Activated CD4-positive, alpha-beta T cell treated with anti-CD3 and anti-CD28 coated beads for 36 hours (primary cell): ENCODE measurements at regions of chr6 and their contacts with region 1.

Region 1: GRCh38 chr6:78340755-78341154 is 526.6 kb upstream of the IRAK1BP1 start:
- DNase-seq: no peak
- ATAC-seq: no peak
- H3K4me3 Mint-ChIP-seq: no peak overlapping the region
- H3K27ac Mint-ChIP-seq: no peak overlapping the region
- H3K4me1 Mint-ChIP-seq: no peaks in the 10 kb centered on the region
- H3K27me3 Mint-ChIP-seq: no peaks in the 10 kb centered on the region

Region 2: GRCh38 chr6:78231002-78231401 is 109.8 kb before region 1 on chr6:
- CTCF ChIA-PET with region 1: no interaction called
- POLR2A ChIA-PET with region 1: no interaction called
- intact Hi-C with region 1: no loop called
- DNase-seq: no peak
- ATAC-seq: no peak
- H3K4me3 Mint-ChIP-seq: no peak overlapping the region
- H3K27ac Mint-ChIP-seq: no peak overlapping the region
- H3K4me1 Mint-ChIP-seq: no peaks in the 10 kb centered on the region
- H3K27me3 Mint-ChIP-seq: no peaks in the 10 kb centered on the region

Region 3: DNA sequence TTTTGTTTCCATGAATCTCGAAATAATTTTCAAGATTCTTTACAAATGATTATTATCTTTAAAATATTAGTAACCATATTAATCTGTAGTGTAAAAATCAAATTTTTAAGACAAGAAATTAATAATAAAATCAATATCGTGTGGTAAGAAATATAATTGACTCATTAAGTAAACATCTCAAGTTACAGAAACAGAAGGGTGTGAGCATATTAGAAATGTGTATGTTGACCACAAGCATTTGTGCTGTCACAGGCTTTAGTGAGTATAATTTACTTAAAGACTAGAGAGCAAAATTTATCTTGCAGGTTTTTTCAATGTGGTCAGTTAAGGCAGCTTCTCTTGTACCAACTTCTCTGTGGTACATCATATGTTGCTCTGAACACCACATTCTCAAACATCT is 39.9 kb before region 1 on chr6:
- CTCF ChIA-PET with region 1: no interaction called
- POLR2A ChIA-PET with region 1: no interaction called
- intact Hi-C with region 1: no loop called
- DNase-seq: no peak
- ATAC-seq: no peak
- H3K4me3 Mint-ChIP-seq: no peak overlapping the region
- H3K27ac Mint-ChIP-seq: no peak overlapping the region
- H3K4me1 Mint-ChIP-seq: no peaks in the 10 kb centered on the region
- H3K27me3 Mint-ChIP-seq: no peaks in the 10 kb centered on the region

Region 4: DNA sequence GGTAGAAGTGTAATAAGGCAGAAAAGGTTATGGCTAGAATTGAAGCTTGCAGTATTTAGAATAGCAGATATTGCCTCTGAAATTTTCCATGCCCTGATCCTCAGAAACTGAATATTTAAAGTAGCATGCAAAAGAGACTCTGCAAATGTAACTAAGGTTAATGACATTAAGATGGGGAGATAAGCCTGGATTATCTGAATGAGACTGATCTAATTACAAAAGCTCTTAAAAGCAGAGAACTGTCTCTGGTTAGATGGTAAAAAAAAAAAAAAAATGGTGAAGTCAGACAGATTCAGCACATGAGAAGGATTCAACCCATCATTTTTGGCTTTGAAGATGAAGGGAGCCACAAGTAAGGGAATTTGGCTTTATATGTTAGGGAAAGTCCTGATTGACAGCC is 22.9 kb after region 1 on chr6:
- CTCF ChIA-PET with region 1: no interaction called
- POLR2A ChIA-PET with region 1: interaction called, 3 read pairs
- intact Hi-C with region 1: loop called in 1 of 2 experiments (anchors 2 kb)
- DNase-seq: no peak
- ATAC-seq: no peak
- H3K4me3 Mint-ChIP-seq: no peak overlapping the region
- H3K27ac Mint-ChIP-seq: no peak overlapping the region
- H3K4me1 Mint-ChIP-seq: no peaks in the 10 kb centered on the region
- H3K27me3 Mint-ChIP-seq: no peaks in the 10 kb centered on the region

Region 5: GRCh38 chr6:78390066-78390465 is 49.3 kb after region 1 on chr6:
- CTCF ChIA-PET with region 1: no interaction called
- POLR2A ChIA-PET with region 1: no interaction called
- intact Hi-C with region 1: no loop called
- DNase-seq: no peak
- ATAC-seq: no peak
- H3K4me3 Mint-ChIP-seq: no peak overlapping the region
- H3K27ac Mint-ChIP-seq: no peak overlapping the region
- H3K4me1 Mint-ChIP-seq: no peaks in the 10 kb centered on the region
- H3K27me3 Mint-ChIP-seq: no peaks in the 10 kb centered on the region